ENCODE measurements at regions of chr14 and their contacts with region 1.

Region 1: DNA sequence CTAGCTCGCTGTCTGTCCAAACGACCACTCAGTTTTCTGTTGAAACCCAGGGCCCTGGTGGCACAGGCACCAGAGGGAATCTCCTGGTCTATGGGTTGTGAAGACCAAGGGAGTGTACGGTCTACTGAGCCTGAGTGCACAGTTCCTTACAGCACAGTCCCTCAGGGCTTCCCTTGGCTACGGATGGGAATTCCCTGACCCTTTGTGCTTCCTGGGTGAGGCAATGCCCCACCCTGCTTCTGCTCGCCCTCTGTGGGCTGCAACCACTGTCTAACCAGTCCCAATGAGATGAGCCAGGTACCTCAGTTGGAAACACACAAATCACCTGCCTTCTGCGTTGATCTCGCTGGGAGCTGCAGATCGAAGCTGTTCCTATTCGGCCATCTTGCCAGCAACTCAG is 22.6 kb downstream of the GPHN start:
- DNase-seq: no peak

Region 2: DNA sequence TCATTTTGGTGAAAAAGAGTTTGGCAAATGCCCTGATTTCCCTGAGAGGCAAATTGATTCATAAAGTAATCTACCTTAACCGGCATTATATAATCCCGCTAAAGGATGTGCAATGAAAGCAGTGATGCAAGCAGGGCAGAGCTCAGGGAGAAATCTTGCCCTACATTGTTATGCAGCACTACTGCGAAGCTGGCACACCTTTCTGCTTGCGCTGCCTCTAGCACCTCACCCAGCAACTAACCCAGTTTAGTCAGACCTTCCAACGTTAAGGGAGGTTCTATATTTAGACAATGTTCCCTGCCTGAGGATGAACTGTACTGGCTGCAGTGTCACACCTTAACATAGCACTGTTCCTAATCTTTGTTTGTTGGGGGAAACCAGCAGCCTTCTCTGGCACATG is 105.1 kb before region 1 on chr14:
- intact Hi-C with region 1: loop called (anchors 5 kb)
- DNase-seq: peak; percentile 21 to 94 (median 68)

Measured in head of caudate nucleus (tissue), 42 donors.